Mammary epithelial cell (primary cell): ENCODE measurements at regions of chr11 and their contacts with region 1.

Region 1: GRCh38 chr11:100575870-100576705 is 111.0 kb upstream of the ARHGAP42 start:
- DNase-seq: peak; percentile 38
- H3K4me3 ChIP-seq: no peak overlapping the region
- H3K27ac ChIP-seq: no peak overlapping the region
- H3K4me1 ChIP-seq: peaks cover 15% of the 10 kb centered on the region
- H3K27me3 ChIP-seq: no peaks in the 10 kb centered on the region
- CTCF ChIP-seq: peak; percentile 74 to 80

Region 2: GRCh38 chr11:99015634-99016454 is 1560.2 kb before region 1 on chr11:
- CTCF ChIA-PET with region 1: no interaction called
- dilution Hi-C with region 1: no loop called
- in situ Hi-C with region 1: no loop called
- intact Hi-C with region 1: loop called (anchors 10 kb)
- DNase-seq: peak; percentile 14
- H3K4me3 ChIP-seq: no peak overlapping the region
- H3K27ac ChIP-seq: no peak overlapping the region
- H3K4me1 ChIP-seq: no peaks in the 10 kb centered on the region
- H3K27me3 ChIP-seq: peaks cover 3% of the 10 kb centered on the region
- CTCF ChIP-seq: peak; percentile 87 to 93

Region 3: DNA sequence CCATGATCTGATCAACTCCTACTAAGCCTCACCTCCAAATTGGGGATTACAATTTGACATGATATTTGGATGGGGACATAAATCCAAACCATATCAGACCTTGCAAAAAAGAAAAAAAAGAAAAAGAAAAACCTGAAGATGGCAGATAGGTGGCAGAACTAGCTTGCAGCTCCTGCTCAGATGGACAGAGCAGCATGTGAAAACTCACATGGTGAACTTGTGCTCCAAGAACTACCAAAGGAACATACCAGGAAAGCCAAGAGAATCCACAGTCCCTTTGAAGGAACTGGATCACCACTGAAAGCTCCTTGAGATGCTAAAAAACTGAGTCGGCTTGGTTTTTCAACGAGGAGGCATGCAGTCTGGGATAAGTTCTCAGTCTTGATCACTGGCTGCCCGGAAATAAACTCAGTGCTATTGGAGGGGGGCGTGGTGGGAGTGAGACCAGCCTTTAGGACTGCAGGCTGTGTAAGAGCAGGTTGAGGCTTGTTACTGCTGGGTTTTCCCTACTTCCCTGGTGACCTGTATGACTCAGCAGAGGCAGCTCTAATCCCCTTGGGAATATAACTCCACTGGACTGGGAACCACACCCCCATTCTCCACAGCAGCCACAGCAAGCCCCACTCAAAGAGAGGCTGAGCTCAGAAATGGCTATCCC is 247.3 kb before region 1 on chr11:
- CTCF ChIA-PET with region 1: no interaction called
- dilution Hi-C with region 1: no loop called
- in situ Hi-C with region 1: no loop called
- intact Hi-C with region 1: loop called (anchors 2 kb)
- DNase-seq: peak; percentile 87
- H3K4me3 ChIP-seq: no peak overlapping the region
- H3K27ac ChIP-seq: no peak overlapping the region
- H3K4me1 ChIP-seq: peaks cover 15% of the 10 kb centered on the region
- H3K27me3 ChIP-seq: no peaks in the 10 kb centered on the region
- CTCF ChIP-seq: peak; percentile 4 to 46

Region 4: DNA sequence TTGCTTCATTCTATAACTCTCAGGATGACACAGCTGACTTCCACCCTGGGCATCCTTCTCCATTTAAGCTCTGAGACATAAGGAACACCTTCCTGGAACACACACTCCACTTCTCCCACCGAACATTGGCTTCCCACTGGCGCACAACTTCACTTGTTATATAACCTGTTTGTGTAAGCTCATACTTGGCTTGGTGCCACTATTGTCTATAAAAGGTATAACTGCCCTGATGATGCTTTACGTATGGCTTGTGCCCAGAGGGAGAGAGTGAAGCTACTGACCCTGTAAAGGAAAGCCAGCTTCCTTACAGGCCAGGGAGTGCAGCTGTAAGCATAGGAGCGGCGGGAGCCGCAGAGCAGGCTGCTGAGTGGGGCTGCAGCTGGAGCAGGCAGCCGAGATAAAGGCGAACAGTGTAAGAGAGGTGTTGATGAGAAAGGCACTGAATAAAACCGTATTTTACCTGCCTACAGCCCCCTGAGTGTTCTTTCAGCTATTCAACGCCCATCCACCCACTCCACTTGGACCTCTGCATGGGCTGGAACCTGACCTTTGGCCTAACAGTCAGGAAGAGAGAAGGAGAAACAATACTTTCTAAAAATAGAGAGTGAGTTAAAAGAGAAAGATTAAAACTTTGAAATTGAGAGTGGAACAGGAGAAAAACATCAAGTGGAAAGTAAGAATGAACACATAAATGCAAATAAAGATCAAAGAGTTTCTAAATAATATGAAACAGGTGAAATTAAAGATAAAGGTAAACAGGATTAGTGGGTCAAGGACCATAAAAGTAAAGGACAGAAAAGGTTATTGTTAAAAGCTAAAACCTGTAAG is 141.1 kb before region 1 on chr11:
- CTCF ChIA-PET with region 1: no interaction called
- dilution Hi-C with region 1: no loop called
- in situ Hi-C with region 1: no loop called
- intact Hi-C with region 1: no loop called
- DNase-seq: no peak
- H3K4me3 ChIP-seq: no peak overlapping the region
- H3K27ac ChIP-seq: no peak overlapping the region
- H3K4me1 ChIP-seq: no peaks in the 10 kb centered on the region
- H3K27me3 ChIP-seq: no peaks in the 10 kb centered on the region
- CTCF ChIP-seq: no peak

Region 5: DNA sequence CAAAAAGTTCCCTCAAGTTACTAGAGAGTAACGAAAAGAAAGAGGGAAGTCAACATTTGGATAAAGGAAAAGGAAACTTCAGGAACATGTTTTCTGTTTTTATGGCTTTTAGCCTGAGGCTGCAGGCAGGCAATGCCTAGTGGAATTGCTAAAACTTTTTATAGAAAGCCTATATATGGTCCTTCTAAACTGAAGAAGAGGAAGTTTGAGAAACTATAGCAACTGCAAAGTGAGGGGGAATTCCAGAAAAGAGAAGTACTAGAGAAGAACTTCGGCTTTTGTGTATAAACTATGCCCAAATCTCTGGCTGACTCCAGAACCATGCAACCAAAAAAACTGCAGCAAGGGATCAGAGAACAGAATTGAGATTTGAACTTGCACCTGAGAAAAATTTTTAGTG is 36.7 kb after region 1 on chr11:
- CTCF ChIA-PET with region 1: no interaction called
- dilution Hi-C with region 1: no loop called
- in situ Hi-C with region 1: no loop called
- intact Hi-C with region 1: no loop called
- DNase-seq: no peak
- H3K4me3 ChIP-seq: no peak overlapping the region
- H3K27ac ChIP-seq: no peak overlapping the region
- H3K4me1 ChIP-seq: no peaks in the 10 kb centered on the region
- H3K27me3 ChIP-seq: no peaks in the 10 kb centered on the region
- CTCF ChIP-seq: no peak

Region 6: GRCh38 chr11:100827934-100828661 is 252.0 kb after region 1 on chr11:
- CTCF ChIA-PET with region 1: no interaction called
- dilution Hi-C with region 1: loop called (anchors 25 kb)
- in situ Hi-C with region 1: no loop called
- intact Hi-C with region 1: no loop called
- DNase-seq: peak; percentile 57
- H3K4me3 ChIP-seq: no peak overlapping the region
- H3K27ac ChIP-seq: no peak overlapping the region
- H3K4me1 ChIP-seq: peaks cover 28% of the 10 kb centered on the region
- H3K27me3 ChIP-seq: no peaks in the 10 kb centered on the region
- CTCF ChIP-seq: peak; percentile 27 to 36

Region 7: DNA sequence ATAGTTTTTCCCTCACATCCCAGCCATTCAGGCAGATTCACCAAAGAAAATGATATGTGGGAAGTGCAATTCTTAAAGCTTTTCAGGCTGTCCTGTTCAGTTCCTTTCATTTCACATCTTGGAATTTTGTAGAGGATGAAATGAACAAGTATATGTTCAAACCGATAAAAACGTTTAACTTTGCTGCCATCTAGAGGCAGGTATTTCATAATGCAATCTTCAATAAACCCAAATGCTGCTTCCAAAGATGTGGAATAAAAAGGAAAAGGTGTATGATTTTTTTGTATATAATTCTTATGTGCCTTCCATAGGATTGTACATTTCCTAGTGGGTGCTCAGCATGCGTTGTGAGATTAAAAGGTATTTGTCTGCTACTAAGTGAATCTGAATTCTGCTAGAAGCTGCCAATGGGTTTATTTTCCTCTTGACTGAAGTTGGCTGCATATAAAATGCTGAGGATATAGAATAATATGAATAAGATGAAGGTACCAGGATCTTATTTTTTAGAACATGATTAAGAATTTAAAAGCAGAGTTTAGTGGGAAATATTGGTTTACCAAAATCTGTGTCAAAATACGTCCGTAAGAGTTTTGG is 354.2 kb after region 1 on chr11:
- CTCF ChIA-PET with region 1: no interaction called
- dilution Hi-C with region 1: no loop called
- in situ Hi-C with region 1: loop called (anchors 5 kb)
- intact Hi-C with region 1: loop called (anchors 1 kb)
- DNase-seq: peak; percentile 50
- H3K4me3 ChIP-seq: no peak overlapping the region
- H3K27ac ChIP-seq: peak overlapping the region; percentile 58
- H3K4me1 ChIP-seq: peaks cover 17% of the 10 kb centered on the region
- H3K27me3 ChIP-seq: no peaks in the 10 kb centered on the region
- CTCF ChIP-seq: peak; percentile 61 to 64

Region 8: DNA sequence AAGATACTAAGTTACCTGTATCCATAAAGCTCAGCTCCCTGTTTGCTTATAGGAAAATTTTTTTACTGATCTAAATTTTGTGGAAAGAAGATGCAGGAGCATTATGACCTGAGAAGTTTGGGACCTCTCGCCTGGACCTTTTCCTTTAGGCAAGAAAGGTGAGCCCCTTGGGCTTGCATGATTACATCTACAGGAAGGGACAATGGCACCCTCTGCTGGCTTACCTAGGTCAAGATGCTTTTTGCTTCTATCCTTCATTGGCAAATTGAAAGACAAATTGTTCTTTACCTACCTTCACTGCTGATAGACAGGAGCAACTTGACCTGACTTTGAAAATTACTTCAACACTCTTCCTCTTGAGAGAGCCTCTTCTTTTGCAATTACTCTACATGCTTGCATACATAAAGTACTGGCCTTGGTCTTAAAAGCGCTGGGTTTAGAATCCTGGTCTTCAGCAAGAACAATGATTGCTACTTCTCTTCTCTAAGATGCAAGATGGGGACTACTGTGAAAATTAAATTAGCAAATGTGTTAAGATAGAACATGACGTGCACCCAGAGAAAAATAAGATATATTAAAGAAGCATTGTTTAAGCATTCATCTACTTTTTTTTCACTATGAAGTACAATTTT is 860.5 kb after region 1 on chr11:
- CTCF ChIA-PET with region 1: no interaction called
- dilution Hi-C with region 1: no loop called
- in situ Hi-C with region 1: no loop called
- intact Hi-C with region 1: loop called (anchors 10 kb)
- DNase-seq: peak; percentile 14
- H3K4me3 ChIP-seq: no peak overlapping the region
- H3K27ac ChIP-seq: no peak overlapping the region
- H3K4me1 ChIP-seq: peaks cover 8% of the 10 kb centered on the region
- H3K27me3 ChIP-seq: no peaks in the 10 kb centered on the region
- CTCF ChIP-seq: peak; percentile 79 to 85